Activated CD4-positive, alpha-beta T cell treated with anti-CD3 and anti-CD28 coated beads for 36 hours (primary cell): ENCODE measurements at regions of chr15 and their contacts with region 1.

Region 1: GRCh38 chr15:67024314-67024997 is 40.9 kb upstream of the SMAD3 start:
- DNase-seq: peak; percentile 75
- ATAC-seq: peak; percentile 68
- H3K4me3 Mint-ChIP-seq: no peak overlapping the region
- H3K27ac Mint-ChIP-seq: peak overlapping the region; percentile 53
- H3K4me1 Mint-ChIP-seq: peaks cover 34% of the 10 kb centered on the region
- H3K27me3 Mint-ChIP-seq: peaks cover 6% of the 10 kb centered on the region

Region 2: DNA sequence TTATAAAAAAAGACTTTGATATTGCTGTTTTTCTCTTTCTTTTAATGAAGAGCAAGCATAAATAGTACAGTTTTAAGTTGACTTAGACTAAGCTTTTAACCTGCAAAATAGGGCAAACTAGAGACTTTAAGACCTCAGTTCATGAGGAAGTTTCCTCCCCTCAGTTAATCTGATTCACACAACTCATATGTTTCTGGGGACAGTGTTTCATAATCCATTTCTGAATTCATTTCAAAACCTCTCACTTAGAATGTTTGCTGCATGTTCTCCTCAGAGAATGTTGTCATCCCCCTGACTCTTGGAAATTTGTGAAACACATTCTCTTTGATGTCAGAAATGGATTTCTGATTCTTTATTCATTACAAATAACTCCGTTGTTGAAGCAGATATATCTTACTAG is 721.6 kb after region 1 on chr15:
- CTCF ChIA-PET with region 1: no interaction called
- POLR2A ChIA-PET with region 1: no interaction called
- intact Hi-C with region 1: loop called in 1 of 2 experiments (anchors 10 kb)
- DNase-seq: no peak
- ATAC-seq: peak; percentile 63
- H3K4me3 Mint-ChIP-seq: no peak overlapping the region
- H3K27ac Mint-ChIP-seq: peak overlapping the region; percentile 78
- H3K4me1 Mint-ChIP-seq: peaks cover 55% of the 10 kb centered on the region
- H3K27me3 Mint-ChIP-seq: no peaks in the 10 kb centered on the region